Common myeloid progenitor, CD34-positive (primary cell): ENCODE measurements at regions of chr16 and their contacts with region 1.

Region 1: DNA sequence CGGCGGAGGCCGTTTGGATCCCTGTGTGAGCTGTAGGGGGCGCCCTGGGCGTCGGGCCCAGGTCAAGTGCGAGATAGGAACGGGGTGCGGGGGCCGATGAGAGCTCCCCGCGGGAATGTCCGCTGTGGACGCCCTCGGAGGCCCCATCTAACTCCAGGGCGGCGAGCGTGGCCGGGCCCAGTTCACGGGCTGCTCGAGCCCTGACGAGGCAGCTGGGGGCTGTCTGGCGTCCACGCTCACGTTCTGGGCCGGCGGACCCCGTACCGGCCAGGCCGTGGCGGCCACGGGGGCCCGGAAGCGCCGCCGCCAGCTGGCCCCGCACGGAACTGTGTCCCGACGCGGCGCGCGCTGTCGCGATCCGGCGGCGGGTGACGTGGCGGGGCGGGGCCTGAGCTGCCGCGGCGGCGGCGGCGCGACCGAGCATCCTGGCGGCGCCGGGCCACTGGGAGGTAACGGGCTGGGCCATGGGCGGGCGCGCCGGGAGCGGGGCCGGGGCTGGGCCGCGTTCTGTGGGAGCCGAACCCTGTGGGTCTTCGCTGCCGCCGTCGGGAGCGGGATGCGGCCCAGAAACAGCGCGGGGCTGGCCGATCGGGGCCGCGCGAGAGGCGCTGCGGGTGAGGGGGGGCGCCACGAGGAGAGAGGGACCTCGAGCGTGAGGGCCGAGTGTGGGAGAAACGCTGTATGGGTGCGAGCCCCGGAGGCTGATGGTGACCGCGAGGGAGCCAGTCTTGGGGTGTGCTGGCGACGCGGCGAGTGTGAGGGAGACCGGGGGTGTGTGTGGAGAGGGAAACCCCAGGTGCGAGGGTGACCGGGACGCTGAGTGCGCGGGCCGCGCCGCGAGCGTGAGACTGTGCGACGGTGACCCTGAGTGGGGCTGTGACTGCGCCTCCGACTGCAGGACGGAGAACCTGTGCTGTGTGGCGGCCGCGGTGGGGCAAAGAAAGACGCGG is at the start of gene SLC7A6:
- DNase-seq: peak; percentile 74 to 85 (median 82)
- H3K4me3 ChIP-seq: peak within 1 kb of the TSS; percentile 61 to 88 (median 79)
- H3K27ac ChIP-seq: peak within 1 kb of the TSS; percentile 47 to 68
- H3K4me1 ChIP-seq: peaks cover 0 to 41% (median 31%) of the 10 kb centered on the region in 4 experiments
- H3K27me3 ChIP-seq: no peaks in the 10 kb centered on the region

Region 2: DNA sequence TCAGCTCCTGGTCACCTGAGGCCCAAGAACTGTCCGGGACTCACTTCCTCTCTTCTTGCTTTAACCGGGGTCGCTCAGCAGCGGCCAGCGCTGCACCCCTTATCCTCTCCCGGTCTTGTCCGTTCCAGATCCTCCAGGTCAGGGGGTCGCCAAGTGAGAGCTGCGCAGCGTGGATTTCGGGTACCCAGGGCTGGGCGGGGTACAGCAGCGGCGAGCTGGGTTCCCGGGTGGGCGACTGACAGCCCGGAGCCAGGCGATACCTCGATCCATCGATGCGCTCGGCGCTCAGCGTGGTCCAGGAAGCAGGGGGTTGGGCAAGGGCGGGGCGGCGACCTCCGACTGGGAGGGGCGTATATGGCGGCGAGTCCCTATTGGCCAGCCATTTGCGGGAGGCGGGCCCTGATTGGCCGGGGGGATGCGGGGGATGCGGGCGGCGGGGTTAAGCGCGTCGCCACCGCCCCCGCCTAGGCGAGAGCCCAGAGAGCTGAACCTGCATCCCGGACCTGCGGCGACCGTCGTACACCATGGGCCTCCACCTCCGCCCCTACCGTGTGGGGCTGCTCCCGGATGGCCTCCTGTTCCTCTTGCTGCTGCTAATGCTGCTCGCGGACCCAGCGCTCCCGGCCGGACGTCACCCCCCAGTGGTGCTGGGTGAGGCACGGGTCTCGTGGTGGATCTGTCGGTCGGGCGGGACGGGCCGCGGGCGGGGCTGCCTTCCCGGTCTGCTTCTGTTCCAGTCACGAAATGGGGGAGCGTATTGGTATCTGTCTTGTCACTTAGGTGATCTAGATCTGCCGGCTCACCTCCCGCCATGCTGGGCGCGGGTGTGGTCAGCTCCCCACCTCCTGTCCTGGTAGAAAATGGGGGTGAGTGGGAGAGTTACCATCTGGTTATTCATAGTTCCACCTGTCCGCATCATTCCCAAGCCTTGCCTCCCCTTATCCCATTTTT is 19.2 kb before region 1 on chr16 and contains the start of gene PLA2G15:
- CTCF ChIA-PET with region 1: interaction called, 92 read pairs
- POLR2A ChIA-PET with region 1: no interaction called
- DNase-seq: peak; percentile 93 to 97 (median 96)
- H3K4me3 ChIP-seq: peak within 1 kb of the TSS; percentile 69 to 99 (median 92)
- H3K27ac ChIP-seq: peak within 1 kb of the TSS in 1 of 2 experiments; percentile 66
- H3K4me1 ChIP-seq: peaks cover 4 to 39% (median 34%) of the 10 kb centered on the region in 4 experiments
- H3K27me3 ChIP-seq: no peaks in the 10 kb centered on the region

Region 3: DNA sequence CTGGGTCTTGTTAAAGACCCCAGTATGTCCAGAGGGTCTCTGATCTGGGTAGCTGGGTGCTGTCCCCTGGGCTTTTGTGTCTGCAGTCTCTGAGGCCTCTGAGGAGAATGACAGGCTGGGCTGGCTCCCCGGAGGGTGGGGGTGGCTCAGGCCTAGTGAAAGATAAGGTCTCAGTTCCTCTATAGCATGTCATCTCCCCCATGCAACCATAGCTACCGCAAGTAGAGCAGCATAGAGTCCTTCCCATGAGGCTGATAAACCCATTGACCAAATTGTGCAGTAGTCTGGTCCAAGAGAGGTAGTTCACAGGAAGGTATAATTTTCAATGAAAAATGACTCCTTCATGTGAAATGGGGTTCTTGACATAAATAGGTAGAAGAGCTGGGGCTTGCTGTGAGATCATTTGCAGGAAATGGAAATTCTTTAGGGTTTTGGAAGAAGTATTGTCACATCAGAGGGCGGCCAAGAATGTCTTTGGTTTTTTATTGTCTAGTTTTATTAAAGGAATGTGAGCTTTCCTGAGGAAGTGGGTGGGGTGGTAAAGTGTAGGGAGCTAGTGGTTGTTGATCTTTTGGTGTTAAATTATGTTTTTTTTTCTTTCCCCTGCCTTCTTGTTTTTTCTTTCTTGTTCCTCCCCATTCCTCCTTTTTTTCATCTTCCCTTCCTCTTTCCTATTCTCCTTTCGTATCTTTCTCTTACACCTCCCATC is 25.4 kb after region 1 on chr16:
- CTCF ChIA-PET with region 1: interaction called, 82 read pairs
- POLR2A ChIA-PET with region 1: interaction called, 7 read pairs
- DNase-seq: peak in 2 of 3 donors; percentile 74 to 85
- H3K4me3 ChIP-seq: peak overlapping the region in 3 of 7 experiments; percentile 23 to 59 (median 25)
- H3K27ac ChIP-seq: peak overlapping the region in 1 of 2 experiments; percentile 62
- H3K4me1 ChIP-seq: peaks cover 32 to 73% (median 67%) of the 10 kb centered on the region in 4 experiments
- H3K27me3 ChIP-seq: no peaks in the 10 kb centered on the region

Region 4: GRCh38 chr16:68310761-68311511 is 46.5 kb after region 1 on chr16 and contains the starts of genes PRMT7 and SLC7A6OS:
- CTCF ChIA-PET with region 1: interaction called, 37 read pairs
- POLR2A ChIA-PET with region 1: interaction called, 12 read pairs
- DNase-seq: peak; percentile 92 to 97 (median 96)
- H3K4me3 ChIP-seq: peak within 1 kb of the TSS; percentile 77 to 99 (median 94)
- H3K27ac ChIP-seq: peak within 1 kb of the TSS; percentile 64 to 85
- H3K4me1 ChIP-seq: peaks cover 5 to 33% (median 26%) of the 10 kb centered on the region in 4 experiments
- H3K27me3 ChIP-seq: no peaks in the 10 kb centered on the region

Region 5: DNA sequence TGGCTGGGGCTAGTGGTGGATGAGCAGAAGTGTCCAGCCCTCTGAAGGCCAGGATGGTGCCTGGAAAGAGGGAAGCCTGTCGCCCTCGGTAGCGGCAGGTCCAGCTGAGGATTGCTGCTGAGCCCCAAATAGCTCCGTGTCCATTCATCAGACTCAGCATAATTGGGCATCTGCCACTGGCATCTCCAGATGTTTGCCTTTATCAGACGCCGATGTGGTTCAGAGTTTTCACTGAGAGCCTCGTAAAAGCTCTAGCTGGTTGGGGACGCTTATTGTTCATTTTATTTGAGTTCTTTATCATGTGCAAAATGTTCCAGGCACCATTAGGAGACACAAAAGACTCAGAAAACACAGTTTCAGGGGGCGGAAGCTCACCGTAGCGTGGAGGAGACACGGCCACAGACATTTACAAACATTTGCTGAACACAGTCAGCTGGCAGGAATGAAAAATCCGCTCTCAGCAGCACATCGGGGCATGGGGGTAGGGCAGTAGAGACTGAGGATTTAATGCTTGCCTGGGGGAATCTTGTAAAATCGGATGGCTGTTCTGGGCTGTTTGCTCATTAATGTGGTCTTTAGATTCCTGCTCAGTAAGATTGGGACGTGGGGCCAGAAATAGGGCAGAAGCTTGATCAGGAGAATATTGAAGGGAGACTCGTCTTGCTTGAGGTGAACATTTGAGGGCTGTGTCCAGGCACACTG is 142.2 kb after region 1 on chr16:
- CTCF ChIA-PET with region 1: no interaction called
- POLR2A ChIA-PET with region 1: no interaction called
- DNase-seq: no peak
- H3K4me3 ChIP-seq: no peak overlapping the region
- H3K27ac ChIP-seq: no peak overlapping the region
- H3K4me1 ChIP-seq: no peaks in the 10 kb centered on the region
- H3K27me3 ChIP-seq: no peaks in the 10 kb centered on the region